Caco-2 (cell line): ENCODE measurements at regions of chr11 and their contacts with region 1.

Region 1: GRCh38 chr11:66022401-66023185 is 3.7 kb downstream of the CATSPER1 start:
- DNase-seq: peak; percentile 73 to 89
- H3K4me3 ChIP-seq: no peak overlapping the region; the same call in 1 of the 2 replicates
- H3K4me3 Mint-ChIP-seq: peak overlapping the region; percentile 63
- H3K27ac Mint-ChIP-seq: peak overlapping the region; percentile 40
- H3K4me1 ChIP-seq: no peaks in the 10 kb centered on the region
- H3K4me1 Mint-ChIP-seq: no peaks in the 10 kb centered on the region
- H3K27me3 ChIP-seq: no peaks in the 10 kb centered on the region
- H3K27me3 Mint-ChIP-seq: peaks cover 3% of the 10 kb centered on the region
- CTCF ChIP-seq: peak; percentile 96

Region 2: GRCh38 chr11:65945430-65945911 is 77.1 kb before region 1 on chr11 and contains the start of gene TSGA10IP:
- CTCF ChIA-PET with region 1: no interaction called
- POLR2A ChIA-PET with region 1: no interaction called
- intact Hi-C with region 1: no loop called
- DNase-seq: no peak
- H3K4me3 ChIP-seq: no peak within 1 kb of the TSS
- H3K4me3 Mint-ChIP-seq: no peak within 1 kb of the TSS
- H3K27ac Mint-ChIP-seq: no peak within 1 kb of the TSS
- H3K4me1 ChIP-seq: no peaks in the 10 kb centered on the region
- H3K4me1 Mint-ChIP-seq: no peaks in the 10 kb centered on the region
- H3K27me3 ChIP-seq: no peaks in the 10 kb centered on the region
- H3K27me3 Mint-ChIP-seq: no peaks in the 10 kb centered on the region
- CTCF ChIP-seq: no peak
- total RNA-seq, gene TSGA10IP: 0.79 TPM in 1 of 2 replicates, not detected in the other

Region 3: DNA sequence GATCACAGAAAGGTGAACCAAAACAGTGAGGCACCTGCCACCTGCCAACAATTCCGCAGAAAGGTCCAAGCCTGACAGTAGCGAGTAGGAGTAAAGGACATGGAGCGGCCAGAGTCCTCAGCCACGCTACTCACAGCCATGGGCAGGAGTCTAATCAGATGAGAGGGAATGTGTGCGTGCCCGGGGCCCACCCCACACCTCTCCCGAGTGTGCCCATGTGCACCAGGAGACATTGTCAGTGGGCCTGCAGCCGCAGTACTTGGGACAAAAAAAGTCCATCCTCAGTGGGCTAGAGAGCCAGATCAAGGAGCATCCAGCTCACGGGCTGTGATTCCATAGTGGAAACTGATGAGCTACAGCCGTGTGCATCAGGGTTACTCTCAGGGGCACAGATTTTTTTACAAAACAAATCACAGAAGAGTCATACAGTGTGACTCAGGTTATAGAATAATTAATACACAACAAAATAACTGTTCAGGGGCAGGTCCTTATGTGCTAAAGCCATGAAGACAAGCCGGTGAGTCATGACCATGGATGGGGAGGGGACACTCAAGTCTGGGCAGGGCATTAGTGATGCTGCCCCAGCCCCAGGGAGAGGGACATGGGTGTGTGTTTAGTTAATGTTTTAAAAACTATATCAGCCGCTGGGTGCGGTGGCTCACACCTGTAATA is 49.0 kb before region 1 on chr11:
- CTCF ChIA-PET with region 1: no interaction called
- POLR2A ChIA-PET with region 1: no interaction called
- intact Hi-C with region 1: no loop called
- DNase-seq: no peak
- H3K4me3 ChIP-seq: no peak overlapping the region
- H3K4me3 Mint-ChIP-seq: no peak overlapping the region
- H3K27ac Mint-ChIP-seq: no peak overlapping the region
- H3K4me1 ChIP-seq: no peaks in the 10 kb centered on the region
- H3K4me1 Mint-ChIP-seq: no peaks in the 10 kb centered on the region
- H3K27me3 ChIP-seq: no peaks in the 10 kb centered on the region
- H3K27me3 Mint-ChIP-seq: no peaks in the 10 kb centered on the region
- CTCF ChIP-seq: no peak

Region 4: DNA sequence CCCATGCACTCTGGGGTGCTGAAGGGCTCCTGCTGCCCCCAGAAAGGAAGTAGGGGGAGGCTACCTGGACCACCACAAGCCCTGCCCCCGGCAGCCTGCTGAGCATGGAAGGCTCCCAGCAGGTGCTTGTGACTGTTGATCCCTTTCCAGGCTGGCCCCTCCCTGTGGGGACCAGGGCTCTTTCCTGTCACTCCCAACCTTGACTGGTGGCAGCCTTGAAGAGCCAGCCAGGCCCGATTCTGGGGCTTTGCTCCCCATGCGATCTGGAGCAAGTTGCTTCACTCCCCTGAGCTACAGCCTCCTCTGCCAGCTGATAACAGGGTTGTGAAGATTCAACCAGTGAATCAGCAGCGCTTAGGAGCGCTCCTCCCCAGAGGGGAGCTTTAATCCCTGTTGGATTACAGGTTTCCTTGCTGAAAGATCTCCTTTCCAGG is 15.4 kb before region 1 on chr11:
- CTCF ChIA-PET with region 1: interaction called, 12 read pairs
- POLR2A ChIA-PET with region 1: no interaction called
- intact Hi-C with region 1: loop called (anchors 2 kb)
- DNase-seq: no peak
- H3K4me3 ChIP-seq: no peak overlapping the region
- H3K4me3 Mint-ChIP-seq: no peak overlapping the region
- H3K27ac Mint-ChIP-seq: no peak overlapping the region
- H3K4me1 ChIP-seq: peaks cover 13% of the 10 kb centered on the region
- H3K4me1 Mint-ChIP-seq: peaks cover 7% of the 10 kb centered on the region
- H3K27me3 ChIP-seq: no peaks in the 10 kb centered on the region
- H3K27me3 Mint-ChIP-seq: no peaks in the 10 kb centered on the region
- CTCF ChIP-seq: no peak